Ascending aorta (tissue), 2 donors: ENCODE measurements at regions of chr4 and their contacts with region 1.

Region 1: DNA sequence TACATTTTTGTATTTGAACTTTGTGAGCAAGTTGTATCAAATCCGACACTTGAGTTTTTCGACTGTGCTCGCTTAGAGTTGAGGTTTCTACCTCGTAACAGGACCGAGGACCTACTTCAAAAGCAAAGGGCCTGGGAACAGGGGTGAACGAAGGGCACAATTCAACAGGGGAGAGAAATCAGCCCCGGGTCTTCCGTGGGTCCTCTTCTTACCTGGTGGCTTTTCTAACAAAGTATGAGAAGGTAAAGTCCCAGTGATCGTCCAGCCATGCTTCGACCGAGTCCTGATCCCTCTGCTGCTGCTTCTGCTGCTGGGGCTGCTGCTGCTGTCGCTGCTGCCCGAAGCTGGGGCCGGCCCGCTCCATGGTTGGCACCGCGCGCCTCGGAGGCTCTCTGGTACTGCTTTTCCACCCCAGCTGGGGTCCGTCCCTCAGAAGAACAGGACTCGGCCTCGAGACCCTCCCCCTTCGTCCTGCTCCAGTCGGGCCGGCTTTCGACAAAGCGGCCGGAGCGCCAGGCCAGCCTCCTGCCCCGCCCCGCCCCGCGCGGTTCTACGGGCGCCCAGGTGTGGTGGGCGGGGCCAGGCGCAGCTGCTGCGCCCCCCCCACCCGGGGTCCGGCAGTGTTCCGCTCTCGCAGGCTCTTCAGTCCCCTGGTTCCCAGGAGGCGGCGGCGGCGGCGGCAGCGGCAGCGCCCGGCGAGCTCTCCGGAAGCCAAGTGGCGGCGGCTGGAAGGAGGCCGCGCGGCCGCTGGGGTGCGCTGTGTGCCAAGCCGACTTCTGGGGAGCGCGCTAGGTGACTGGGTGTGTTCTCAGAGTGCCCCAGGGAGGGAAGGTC is at the start of gene PDE5A:
- DNase-seq: peak in 1 of 2 donors; percentile 88
- H3K4me3 ChIP-seq: peak within 1 kb of the TSS; percentile 73 to 86
- H3K27ac ChIP-seq: peak within 1 kb of the TSS; percentile 91 to 97
- H3K4me1 ChIP-seq: peaks cover 0 to 8% of the 10 kb centered on the region in 2 donors
- H3K27me3 ChIP-seq: no peaks in the 10 kb centered on the region
- CTCF ChIP-seq: peak; percentile 70 to 88 (median 81)
- total RNA-seq, gene PDE5A: 39.7 TPM

Region 2: GRCh38 chr4:119207051-119207450 is 421.5 kb before region 1 on chr4:
- intact Hi-C with region 1: no loop called
- DNase-seq: no peak
- H3K4me3 ChIP-seq: no peak overlapping the region
- H3K27ac ChIP-seq: peak overlapping the region in 1 of 2 donors; percentile 52
- H3K4me1 ChIP-seq: peaks cover 0 to 26% of the 10 kb centered on the region in 2 donors
- H3K27me3 ChIP-seq: no peaks in the 10 kb centered on the region
- CTCF ChIP-seq: no peak

Region 3: DNA sequence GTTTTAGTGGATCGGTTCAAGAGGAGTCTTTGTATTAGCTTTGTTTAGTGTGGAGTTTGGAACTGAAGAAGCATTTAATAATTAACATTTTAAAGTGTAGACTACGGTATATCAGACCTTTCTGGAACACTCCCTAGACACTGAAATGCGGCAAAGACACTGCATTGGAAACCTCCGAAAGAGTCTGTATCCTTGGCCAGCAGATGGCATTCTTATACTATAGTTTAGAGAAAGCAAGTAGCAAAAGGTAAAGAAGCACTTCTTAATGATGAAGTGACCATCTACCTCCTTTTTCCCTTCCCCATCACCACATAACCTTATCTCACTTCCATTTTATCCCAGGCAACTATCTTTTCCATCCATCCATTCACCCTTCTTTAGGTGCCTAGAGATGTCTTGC is 314.2 kb before region 1 on chr4:
- intact Hi-C with region 1: loop called (anchors 2 kb)
- DNase-seq: peak in 1 of 2 donors; percentile 71
- H3K4me3 ChIP-seq: no peak overlapping the region
- H3K27ac ChIP-seq: peak overlapping the region in 1 of 2 donors; percentile 55
- H3K4me1 ChIP-seq: peaks cover 4 to 10% of the 10 kb centered on the region in 2 donors
- H3K27me3 ChIP-seq: no peaks in the 10 kb centered on the region
- CTCF ChIP-seq: peak; percentile 28 to 58 (median 43)

Region 4: GRCh38 chr4:119683518-119683917 is 55.0 kb after region 1 on chr4:
- intact Hi-C with region 1: loop called (anchors 5 kb)
- DNase-seq: no peak
- H3K4me3 ChIP-seq: no peak overlapping the region
- H3K27ac ChIP-seq: peak overlapping the region; percentile 48 to 77
- H3K4me1 ChIP-seq: peaks cover 6 to 11% of the 10 kb centered on the region in 2 donors
- H3K27me3 ChIP-seq: no peaks in the 10 kb centered on the region
- CTCF ChIP-seq: no peak

Region 5: GRCh38 chr4:119729835-119730670 is 101.5 kb after region 1 on chr4:
- intact Hi-C with region 1: loop called (anchors 5 kb)
- DNase-seq: peak; percentile 11 to 90
- H3K4me3 ChIP-seq: peak overlapping the region in 1 of 2 donors; percentile 6
- H3K27ac ChIP-seq: peak overlapping the region; percentile 89 to 90
- H3K4me1 ChIP-seq: peaks cover 12 to 74% of the 10 kb centered on the region in 2 donors
- H3K27me3 ChIP-seq: no peaks in the 10 kb centered on the region
- CTCF ChIP-seq: no peak

Region 6: GRCh38 chr4:119833611-119834010 is 205.1 kb after region 1 on chr4:
- intact Hi-C with region 1: loop called (anchors 2 kb)
- DNase-seq: peak in 1 of 2 donors; percentile 66
- H3K4me3 ChIP-seq: no peak overlapping the region
- H3K27ac ChIP-seq: peak overlapping the region; percentile 79 to 80
- H3K4me1 ChIP-seq: peaks cover 0 to 23% of the 10 kb centered on the region in 2 donors
- H3K27me3 ChIP-seq: no peaks in the 10 kb centered on the region
- CTCF ChIP-seq: no peak

Region 7: GRCh38 chr4:120049732-120050494 is 421.4 kb after region 1 on chr4:
- intact Hi-C with region 1: loop called (anchors 1 kb)
- DNase-seq: peak; percentile 23 to 95
- H3K4me3 ChIP-seq: peak overlapping the region; percentile 35 to 56
- H3K27ac ChIP-seq: peak overlapping the region; percentile 78 to 80
- H3K4me1 ChIP-seq: peaks cover 6 to 15% of the 10 kb centered on the region in 2 donors
- H3K27me3 ChIP-seq: no peaks in the 10 kb centered on the region
- CTCF ChIP-seq: peak; percentile 76 to 89 (median 81)